ENCODE measurements at regions of chr2 and their contacts with region 1.

Region 1: GRCh38 chr2:67650291-67651133 is 253.4 kb downstream of the ETAA1 start:
- DNase-seq: peak; percentile 67
- H3K4me3 ChIP-seq: no peak overlapping the region
- H3K27me3 ChIP-seq: no peaks in the 10 kb centered on the region
- CTCF ChIP-seq: peak; percentile 90

Region 2: GRCh38 chr2:67476809-67477790 is 173.4 kb before region 1 on chr2:
- CTCF ChIA-PET with region 1: interaction called, 22 read pairs
- POLR2A ChIA-PET with region 1: no interaction called
- DNase-seq: peak; percentile 13
- H3K4me3 ChIP-seq: no peak overlapping the region
- H3K27me3 ChIP-seq: no peaks in the 10 kb centered on the region
- CTCF ChIP-seq: peak; percentile 61

Region 3: GRCh38 chr2:67660871-67661270 is 10.4 kb after region 1 on chr2:
- CTCF ChIA-PET with region 1: interaction called, 10 read pairs
- POLR2A ChIA-PET with region 1: no interaction called
- DNase-seq: no peak
- H3K4me3 ChIP-seq: no peak overlapping the region
- H3K27me3 ChIP-seq: no peaks in the 10 kb centered on the region
- CTCF ChIP-seq: no peak

Region 4: DNA sequence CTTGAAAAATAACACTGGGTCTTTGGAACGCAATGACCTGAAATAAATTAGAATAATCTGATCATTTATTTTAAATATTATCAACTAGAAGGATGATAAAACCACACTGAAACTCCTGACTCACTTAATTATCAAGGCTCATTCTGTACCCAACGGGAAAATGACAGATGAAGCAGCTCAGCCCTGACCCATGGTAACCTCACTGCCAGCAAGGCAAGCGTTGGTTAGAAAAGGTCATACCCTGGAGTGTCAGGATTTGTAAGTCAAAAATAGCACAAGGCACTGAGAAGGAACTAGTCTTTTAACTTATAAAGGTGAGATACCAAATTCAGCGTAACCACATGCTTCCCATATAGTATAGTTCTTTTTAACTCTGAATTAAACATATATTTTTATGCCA is 24.2 kb after region 1 on chr2:
- CTCF ChIA-PET with region 1: no interaction called
- POLR2A ChIA-PET with region 1: no interaction called
- DNase-seq: no peak
- H3K4me3 ChIP-seq: no peak overlapping the region
- H3K27me3 ChIP-seq: no peaks in the 10 kb centered on the region
- CTCF ChIP-seq: no peak

Region 5: GRCh38 chr2:67840460-67841068 is 190.1 kb after region 1 on chr2:
- CTCF ChIA-PET with region 1: interaction called, 25 read pairs
- POLR2A ChIA-PET with region 1: interaction called, 9 read pairs
- DNase-seq: no peak
- H3K4me3 ChIP-seq: no peak overlapping the region
- H3K27me3 ChIP-seq: no peaks in the 10 kb centered on the region
- CTCF ChIP-seq: peak; percentile 91

Measured in BJ (cell line).